CD4-positive, alpha-beta memory T cell (primary cell): ENCODE measurements at regions of chr21 and their contacts with region 1.

Region 1: DNA sequence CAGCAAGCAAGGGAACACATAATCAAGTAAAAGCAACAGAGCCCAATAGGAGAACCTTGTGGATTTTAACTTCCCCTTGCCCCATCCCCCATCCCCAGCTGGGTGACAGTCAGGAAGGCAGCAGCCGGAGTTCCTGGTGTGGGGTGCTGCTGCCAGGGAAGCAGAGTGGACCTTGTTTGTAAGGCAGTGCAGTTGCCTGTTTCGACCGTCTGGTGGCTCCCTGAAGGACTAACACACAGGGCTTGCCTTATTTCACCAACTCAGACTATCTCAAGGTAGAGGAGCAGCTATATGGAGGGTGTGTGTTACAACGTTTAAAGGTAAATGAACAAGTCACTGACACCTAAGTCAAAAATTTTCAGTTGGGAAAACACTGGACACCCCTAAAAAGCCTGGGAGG is 6.6 kb downstream of the KRTAP10-8 start:
- DNase-seq: no peak
- H3K4me3 ChIP-seq: peak overlapping the region in 1 of 2 donors; percentile 12
- H3K4me3 Mint-ChIP-seq: peak overlapping the region; percentile 39 to 81 (median 68)
- H3K27ac ChIP-seq: peak overlapping the region; percentile 40
- H3K27ac Mint-ChIP-seq: peak overlapping the region; percentile 83 to 96 (median 93)
- H3K4me1 ChIP-seq: peaks cover 43% of the 10 kb centered on the region
- H3K4me1 Mint-ChIP-seq: peaks cover 31 to 60% (median 48%) of the 10 kb centered on the region in 4 donors
- H3K27me3 ChIP-seq: no peaks in the 10 kb centered on the region
- H3K27me3 Mint-ChIP-seq: no peaks in the 10 kb centered on the region

Region 2: GRCh38 chr21:44547656-44548331 is 70.7 kb before region 1 on chr21:
- CTCF ChIA-PET with region 1: interaction called, 4 read pairs
- POLR2A ChIA-PET with region 1: interaction called, 28 read pairs
- intact Hi-C with region 1: loop called (anchors 10 kb)
- DNase-seq: peak; percentile 43 to 58 (median 50)
- H3K4me3 ChIP-seq: peak overlapping the region in 1 of 2 donors; percentile 35
- H3K4me3 Mint-ChIP-seq: peak overlapping the region; percentile 76 to 86 (median 82)
- H3K27ac ChIP-seq: no peak overlapping the region
- H3K27ac Mint-ChIP-seq: peak overlapping the region; percentile 82 to 95 (median 87)
- H3K4me1 ChIP-seq: peaks cover 20% of the 10 kb centered on the region
- H3K4me1 Mint-ChIP-seq: peaks cover 19 to 35% (median 28%) of the 10 kb centered on the region in 4 donors
- H3K27me3 ChIP-seq: no peaks in the 10 kb centered on the region
- H3K27me3 Mint-ChIP-seq: no peaks in the 10 kb centered on the region

Region 3: DNA sequence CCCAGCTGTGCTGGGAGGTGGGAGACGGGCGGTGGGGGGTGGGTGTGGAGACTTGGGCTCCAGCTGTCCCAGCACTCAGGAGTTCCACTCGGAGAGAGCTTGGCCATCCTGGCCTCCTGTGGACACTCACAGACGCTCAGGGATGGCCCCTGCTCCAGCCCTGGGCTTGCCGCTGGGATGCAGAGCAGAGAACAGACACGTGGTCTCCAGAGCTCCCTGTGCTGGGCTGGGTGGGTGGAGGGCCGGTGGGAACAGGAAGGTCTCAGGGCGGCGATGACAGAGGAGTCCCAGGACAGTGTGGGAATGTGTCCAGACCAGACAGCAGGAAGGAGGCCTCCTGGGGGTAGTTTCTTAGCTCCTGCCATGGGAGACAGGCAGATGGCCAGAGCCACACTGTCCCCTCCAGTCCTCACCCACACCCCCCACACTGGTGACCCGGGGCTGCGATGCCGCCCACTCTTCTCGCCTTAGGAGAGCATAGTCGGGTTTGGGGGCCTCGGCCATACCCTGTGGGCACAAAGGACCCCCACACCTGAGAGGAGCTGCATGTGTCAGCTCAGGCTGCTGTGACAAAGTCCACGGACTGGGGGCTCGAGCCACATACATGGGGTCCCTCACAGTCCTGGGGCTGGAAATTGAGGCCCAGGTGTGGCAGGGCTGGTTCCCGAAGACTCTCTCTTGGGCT is 10.3 kb after region 1 on chr21:
- CTCF ChIA-PET with region 1: interaction called, 9 read pairs
- POLR2A ChIA-PET with region 1: interaction called, 16 read pairs
- intact Hi-C with region 1: no loop called
- DNase-seq: no peak
- H3K4me3 ChIP-seq: no peak overlapping the region
- H3K4me3 Mint-ChIP-seq: no peak overlapping the region
- H3K27ac ChIP-seq: no peak overlapping the region
- H3K27ac Mint-ChIP-seq: peak overlapping the region in 3 of 7 donors; percentile 39 to 79 (median 60)
- H3K4me1 ChIP-seq: peaks cover 26% of the 10 kb centered on the region
- H3K4me1 Mint-ChIP-seq: peaks cover 10 to 31% (median 22%) of the 10 kb centered on the region in 4 donors
- H3K27me3 ChIP-seq: no peaks in the 10 kb centered on the region
- H3K27me3 Mint-ChIP-seq: no peaks in the 10 kb centered on the region

Region 4: DNA sequence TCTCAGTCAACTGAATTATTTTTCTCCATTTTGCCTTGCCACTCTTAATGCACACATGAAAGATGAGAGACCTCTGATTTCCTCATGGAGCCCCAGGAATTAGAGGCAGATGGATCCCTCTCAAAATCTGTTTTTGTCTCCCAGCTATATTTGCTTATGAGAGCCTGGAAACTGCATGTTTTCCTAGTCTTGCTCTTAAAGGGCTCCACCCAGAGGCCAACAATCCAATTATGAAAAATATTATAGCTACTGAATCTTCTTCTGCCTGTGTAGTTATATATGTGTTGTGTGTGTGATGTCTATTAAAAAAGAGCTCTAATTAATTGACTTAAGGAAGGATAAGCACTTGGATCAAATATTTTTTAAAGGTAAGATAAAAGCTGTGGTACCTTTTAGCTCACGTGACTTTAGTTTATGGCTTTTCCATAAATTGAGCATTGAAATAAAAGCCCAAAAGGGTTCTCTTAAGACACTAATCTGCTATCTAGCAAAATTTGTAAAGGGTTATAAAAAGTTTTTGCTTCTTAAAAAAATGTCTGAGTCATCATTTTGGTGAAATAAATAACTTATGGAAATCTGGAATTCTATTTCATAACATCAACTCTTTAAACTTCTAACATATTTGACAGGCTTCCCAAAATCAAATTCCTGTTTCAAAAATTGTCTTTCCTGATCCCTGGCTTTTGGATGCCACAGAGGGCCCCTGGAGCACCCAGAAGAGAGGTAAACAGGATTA is 124.1 kb after region 1 on chr21:
- CTCF ChIA-PET with region 1: interaction called, 19 read pairs
- POLR2A ChIA-PET with region 1: interaction called, 6 read pairs
- intact Hi-C with region 1: no loop called
- DNase-seq: peak in 4 of 5 donors; percentile 40 to 54 (median 47)
- H3K4me3 ChIP-seq: no peak overlapping the region
- H3K4me3 Mint-ChIP-seq: no peak overlapping the region
- H3K27ac ChIP-seq: no peak overlapping the region
- H3K27ac Mint-ChIP-seq: peak overlapping the region in 4 of 7 donors; percentile 48 to 83 (median 79)
- H3K4me1 ChIP-seq: no peaks in the 10 kb centered on the region
- H3K4me1 Mint-ChIP-seq: peaks cover 4 to 12% (median 4%) of the 10 kb centered on the region in 4 donors
- H3K27me3 ChIP-seq: no peaks in the 10 kb centered on the region
- H3K27me3 Mint-ChIP-seq: peaks cover 0 to under 1% of the 10 kb centered on the region in 2 donors